ENCODE measurements at regions of chr1 and their contacts with region 1.

Region 1: DNA sequence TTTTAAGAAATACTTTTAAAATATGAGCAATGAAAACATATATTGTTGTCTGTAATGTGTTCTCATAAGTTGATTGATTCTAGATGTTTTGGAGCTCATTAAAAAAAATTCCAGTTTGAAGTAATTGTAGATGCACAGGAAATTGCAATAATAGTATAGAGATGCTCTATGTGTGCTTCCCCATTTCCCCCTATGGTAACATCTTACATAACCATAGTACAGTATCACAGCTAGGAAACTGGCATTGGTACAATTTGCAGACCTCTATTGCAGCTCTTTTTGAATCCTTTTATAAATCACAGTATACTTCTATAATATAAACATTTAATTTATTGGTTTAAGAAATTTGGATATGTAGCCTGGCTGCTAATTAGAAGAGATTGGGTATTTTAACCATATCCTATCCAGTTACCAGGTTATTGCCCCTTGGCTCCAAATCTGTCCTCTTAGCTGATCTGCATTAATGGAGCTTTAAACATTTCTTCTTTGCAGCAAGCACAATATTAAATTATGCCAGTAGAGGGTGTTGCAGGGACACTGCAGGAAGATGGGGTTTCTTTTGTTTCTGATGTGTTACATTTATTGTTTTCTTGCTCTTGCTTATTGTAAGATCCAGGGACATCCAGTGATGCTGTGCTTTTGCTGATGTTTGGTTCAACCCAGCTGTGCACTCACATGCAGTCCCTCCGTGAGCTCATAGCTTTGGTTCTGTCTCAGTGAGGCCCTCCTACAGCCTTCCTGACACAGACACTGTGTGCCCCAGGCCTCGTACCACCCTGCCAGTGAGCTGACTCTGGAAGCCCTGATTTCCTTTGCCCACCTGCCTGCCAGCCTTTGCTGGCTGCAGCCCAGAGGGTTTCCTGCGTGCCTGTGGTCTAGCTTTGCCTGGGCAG is 103.3 kb downstream of the RABGAP1L start:
- DNase-seq: peak in 1 of 35 experiments; percentile 43
- ATAC-seq: peak in 2 of 4 experiments; percentile 32 to 35
- H3K4me3 ChIP-seq: no peak overlapping the region
- H3K4me3 Mint-ChIP-seq: no peak overlapping the region
- H3K27ac ChIP-seq: no peak overlapping the region
- H3K27ac Mint-ChIP-seq: no peak overlapping the region
- H3K4me1 ChIP-seq: no peaks in the 10 kb centered on the region
- H3K4me1 Mint-ChIP-seq: no peaks in the 10 kb centered on the region
- H3K27me3 ChIP-seq: no peaks in the 10 kb centered on the region
- H3K27me3 Mint-ChIP-seq: no peaks in the 10 kb centered on the region

Region 2: DNA sequence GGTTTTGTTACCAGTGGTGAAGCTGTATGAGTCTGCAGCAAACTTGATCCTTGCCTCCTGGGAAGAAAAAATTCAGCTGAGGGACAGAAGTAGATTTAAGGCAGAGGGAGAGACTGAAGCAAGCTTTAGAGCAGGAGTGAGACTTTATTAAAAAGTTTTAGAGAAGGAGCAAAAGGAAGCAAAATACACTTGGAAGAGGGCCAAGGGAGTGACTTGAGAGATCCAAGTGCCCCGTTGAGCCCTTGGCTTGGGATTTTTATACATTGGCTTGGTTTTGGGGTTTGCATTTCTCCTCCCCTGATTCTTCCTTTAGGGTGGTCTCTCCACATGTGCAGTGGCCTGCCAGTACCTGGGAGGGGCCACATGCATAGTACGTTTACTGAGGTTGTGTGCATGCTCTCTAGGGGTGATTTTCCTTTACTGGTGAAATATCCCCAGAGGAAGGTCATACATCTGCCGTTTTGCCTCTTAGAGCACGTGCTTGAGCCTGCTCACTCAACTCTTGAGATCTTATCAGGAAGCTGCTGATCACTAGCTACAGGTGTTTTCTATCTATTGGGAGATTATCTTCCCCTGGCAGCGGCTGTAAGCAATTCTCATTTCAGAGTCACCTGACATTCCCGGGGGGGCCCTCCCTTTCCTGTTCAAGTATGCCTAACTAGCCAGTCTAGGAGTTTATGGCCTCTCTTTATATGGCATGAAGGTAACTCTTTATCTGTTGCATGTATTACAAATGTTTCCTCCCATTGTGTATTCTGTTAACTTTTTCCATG is 1583.4 kb before region 1 on chr1:
- CTCF ChIA-PET with region 1: no interaction called
- POLR2A ChIA-PET with region 1: no interaction called
- DNase-seq: no peak
- ATAC-seq: no peak
- H3K4me3 ChIP-seq: no peak overlapping the region
- H3K4me3 Mint-ChIP-seq: no peak overlapping the region
- H3K27ac ChIP-seq: peak overlapping the region; percentile 6
- H3K27ac Mint-ChIP-seq: peak overlapping the region; percentile 22 to 31
- H3K4me1 ChIP-seq: peaks cover 16 to 46% of the 10 kb centered on the region in 2 experiments
- H3K4me1 Mint-ChIP-seq: peaks cover 47 to 79% (median 58%) of the 10 kb centered on the region in 3 donors
- H3K27me3 ChIP-seq: no peaks in the 10 kb centered on the region
- H3K27me3 Mint-ChIP-seq: peaks cover 0 to 4% of the 10 kb centered on the region in 2 donors

Region 3: DNA sequence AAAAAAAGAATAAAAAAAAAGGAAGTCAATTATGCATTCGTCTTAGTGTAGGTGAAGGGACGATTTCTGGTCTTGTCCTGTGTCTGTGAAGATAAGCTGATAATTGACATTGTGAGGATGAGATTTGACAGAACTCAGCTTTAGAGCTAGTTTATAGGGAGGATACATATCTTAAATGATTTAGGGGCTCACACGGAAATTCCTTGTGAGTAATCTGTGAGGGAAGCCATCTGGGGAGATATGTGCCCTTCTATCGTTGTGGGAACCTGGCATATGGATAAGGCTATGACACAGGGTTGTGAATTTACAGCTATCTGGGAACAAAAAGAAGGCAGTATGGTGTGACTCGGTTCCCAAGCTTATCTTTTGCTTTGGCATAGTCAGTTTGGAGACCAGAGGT is 32.2 kb before region 1 on chr1:
- CTCF ChIA-PET with region 1: no interaction called
- POLR2A ChIA-PET with region 1: no interaction called
- DNase-seq: no peak
- ATAC-seq: no peak
- H3K4me3 ChIP-seq: no peak overlapping the region
- H3K4me3 Mint-ChIP-seq: no peak overlapping the region
- H3K27ac ChIP-seq: no peak overlapping the region
- H3K27ac Mint-ChIP-seq: no peak overlapping the region
- H3K4me1 ChIP-seq: no peaks in the 10 kb centered on the region
- H3K4me1 Mint-ChIP-seq: peaks cover 0 to 8% (median 8%) of the 10 kb centered on the region in 3 donors
- H3K27me3 ChIP-seq: no peaks in the 10 kb centered on the region
- H3K27me3 Mint-ChIP-seq: no peaks in the 10 kb centered on the region

Region 4: GRCh38 chr1:174358786-174359453 is 96.3 kb after region 1 on chr1:
- CTCF ChIA-PET with region 1: no interaction called
- POLR2A ChIA-PET with region 1: no interaction called
- DNase-seq: peak in 1 of 35 experiments; percentile 9
- ATAC-seq: no peak
- H3K4me3 ChIP-seq: no peak overlapping the region
- H3K4me3 Mint-ChIP-seq: no peak overlapping the region
- H3K27ac ChIP-seq: no peak overlapping the region
- H3K27ac Mint-ChIP-seq: no peak overlapping the region
- H3K4me1 ChIP-seq: no peaks in the 10 kb centered on the region
- H3K4me1 Mint-ChIP-seq: peaks cover 11 to 25% (median 14%) of the 10 kb centered on the region in 3 donors
- H3K27me3 ChIP-seq: no peaks in the 10 kb centered on the region
- H3K27me3 Mint-ChIP-seq: no peaks in the 10 kb centered on the region

Region 5: GRCh38 chr1:174726167-174726879 is 463.7 kb after region 1 on chr1:
- CTCF ChIA-PET with region 1: interaction called, 3 to 10 read pairs
- POLR2A ChIA-PET with region 1: no interaction called
- DNase-seq: peak in 1 of 35 experiments; percentile 24
- ATAC-seq: no peak
- H3K4me3 ChIP-seq: no peak overlapping the region
- H3K4me3 Mint-ChIP-seq: no peak overlapping the region
- H3K27ac ChIP-seq: no peak overlapping the region
- H3K27ac Mint-ChIP-seq: no peak overlapping the region
- H3K4me1 ChIP-seq: no peaks in the 10 kb centered on the region
- H3K4me1 Mint-ChIP-seq: peaks cover 0 to 2% (median 0%) of the 10 kb centered on the region in 3 donors
- H3K27me3 ChIP-seq: no peaks in the 10 kb centered on the region
- H3K27me3 Mint-ChIP-seq: no peaks in the 10 kb centered on the region

Region 6: GRCh38 chr1:174747613-174748012 is 485.0 kb after region 1 on chr1:
- CTCF ChIA-PET with region 1: interaction called, 8 to 25 read pairs
- POLR2A ChIA-PET with region 1: no interaction called
- DNase-seq: no peak
- ATAC-seq: no peak
- H3K4me3 ChIP-seq: no peak overlapping the region
- H3K4me3 Mint-ChIP-seq: no peak overlapping the region
- H3K27ac ChIP-seq: no peak overlapping the region
- H3K27ac Mint-ChIP-seq: no peak overlapping the region
- H3K4me1 ChIP-seq: no peaks in the 10 kb centered on the region
- H3K4me1 Mint-ChIP-seq: peaks cover 0 to 3% (median 0%) of the 10 kb centered on the region in 3 donors
- H3K27me3 ChIP-seq: no peaks in the 10 kb centered on the region
- H3K27me3 Mint-ChIP-seq: no peaks in the 10 kb centered on the region

Measured in T-cell (primary cell).